Activated B cell treated with CpG ODN at 0.5 μM for 24 hours (primary cell): ENCODE measurements at regions of chrX and their contacts with region 1.

Region 1: GRCh38 chrX:46967547-46967946 is 55.3 kb downstream of the JADE3 start:
- DNase-seq: no peak
- ATAC-seq: peak; percentile 54
- H3K4me3 Mint-ChIP-seq: peak overlapping the region; percentile 70
- H3K27ac Mint-ChIP-seq: peak overlapping the region; percentile 93
- H3K4me1 Mint-ChIP-seq: peaks cover 82% of the 10 kb centered on the region
- H3K27me3 Mint-ChIP-seq: no peaks in the 10 kb centered on the region
- CTCF ChIP-seq: no peak

Region 2: DNA sequence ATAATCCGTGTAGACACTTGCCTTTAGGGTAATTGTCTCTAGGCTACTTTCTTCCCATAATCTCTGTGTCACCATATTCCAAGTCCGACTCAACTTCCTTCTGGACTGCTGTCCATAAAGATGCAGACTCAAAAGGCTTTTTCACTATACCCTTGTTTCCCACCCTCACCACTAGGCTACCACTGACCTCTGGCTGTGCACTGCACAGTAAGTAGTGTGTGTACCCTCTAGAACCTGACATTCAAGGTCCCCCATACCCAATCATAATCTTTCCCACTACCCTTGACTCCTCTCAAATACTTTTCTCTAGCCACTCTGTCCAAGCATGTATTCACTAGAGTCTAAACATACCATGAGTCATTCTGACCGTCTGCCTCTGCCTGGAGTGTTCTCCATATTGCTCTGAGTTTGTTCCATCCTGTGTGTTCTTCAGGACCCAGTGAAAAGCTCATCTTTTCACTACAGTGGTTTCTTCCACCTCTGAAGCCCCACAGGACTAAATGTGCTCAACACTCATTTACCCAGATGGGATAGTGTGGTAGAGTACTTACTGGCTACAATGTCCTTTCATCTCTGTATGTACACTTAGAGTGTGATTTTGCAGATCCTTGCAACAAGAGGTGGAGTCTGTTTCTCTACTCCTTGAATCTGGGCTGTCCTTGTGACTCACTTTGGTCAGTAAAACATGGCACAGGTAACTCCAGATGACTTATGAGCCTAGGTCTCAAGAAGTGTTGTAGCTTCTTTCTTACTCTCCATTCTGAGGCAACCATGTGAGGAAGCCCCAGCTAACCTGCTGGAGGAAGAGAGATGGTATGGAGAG is 37.9 kb before region 1 on chrX:
- CTCF ChIA-PET with region 1: no interaction called
- POLR2A ChIA-PET with region 1: no interaction called
- intact Hi-C with region 1: loop called (anchors 5 kb)
- DNase-seq: no peak
- ATAC-seq: no peak
- H3K4me3 Mint-ChIP-seq: no peak overlapping the region
- H3K27ac Mint-ChIP-seq: peak overlapping the region; percentile 10
- H3K4me1 Mint-ChIP-seq: peaks cover 43% of the 10 kb centered on the region
- H3K27me3 Mint-ChIP-seq: no peaks in the 10 kb centered on the region
- CTCF ChIP-seq: no peak

Region 3: DNA sequence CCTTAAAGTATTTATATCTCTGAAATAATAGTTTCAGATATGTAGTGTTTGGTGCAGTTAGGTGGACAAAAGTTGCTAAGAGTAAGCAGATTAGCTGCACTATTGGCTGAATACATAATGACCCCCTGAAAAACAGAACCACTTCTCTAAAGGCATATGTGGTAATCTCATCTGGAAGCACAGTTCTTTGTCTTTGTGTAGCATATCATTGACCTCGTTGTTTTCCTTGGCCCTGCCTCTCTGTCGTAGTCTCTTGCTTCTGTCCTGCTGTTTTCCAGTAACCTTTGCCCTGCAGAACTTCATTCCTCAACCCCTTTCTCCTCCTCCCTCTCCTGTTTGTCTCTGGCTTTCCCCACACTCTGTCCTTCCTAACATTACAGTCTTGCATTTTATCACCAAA is 13.9 kb before region 1 on chrX:
- CTCF ChIA-PET with region 1: no interaction called
- POLR2A ChIA-PET with region 1: interaction called, 11 read pairs
- intact Hi-C with region 1: loop called (anchors 1 kb)
- DNase-seq: no peak
- ATAC-seq: peak; percentile 62
- H3K4me3 Mint-ChIP-seq: peak overlapping the region; percentile 54
- H3K27ac Mint-ChIP-seq: peak overlapping the region; percentile 80
- H3K4me1 Mint-ChIP-seq: peaks cover 64% of the 10 kb centered on the region
- H3K27me3 Mint-ChIP-seq: no peaks in the 10 kb centered on the region
- CTCF ChIP-seq: no peak